CD8-positive, alpha-beta T cell (primary cell): ENCODE measurements at regions of chr14 and their contacts with region 1.

Region 1: DNA sequence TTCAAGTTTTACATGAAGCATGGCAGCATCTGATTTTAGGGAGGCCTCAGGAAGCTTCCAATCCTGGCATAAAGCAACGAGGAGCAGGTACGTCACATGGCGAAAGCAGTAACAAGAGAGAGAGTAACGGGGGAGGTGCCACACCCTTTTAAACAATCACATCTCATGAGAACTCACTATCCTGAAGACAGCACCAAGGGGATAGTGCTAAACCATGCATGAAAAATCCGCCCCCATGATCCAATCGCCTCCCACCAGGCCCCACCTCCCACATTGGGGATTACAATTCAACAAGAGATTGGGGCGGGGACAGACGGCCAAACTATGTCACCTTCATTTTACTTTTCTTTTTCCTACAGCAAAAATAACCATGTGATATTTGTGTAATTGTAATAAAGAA is 7.2 kb upstream of the MAP3K9 start:
- DNase-seq: no peak
- ATAC-seq: no peak
- H3K4me3 ChIP-seq: no peak overlapping the region
- H3K4me3 Mint-ChIP-seq: no peak overlapping the region
- H3K27ac ChIP-seq: no peak overlapping the region
- H3K27ac Mint-ChIP-seq: no peak overlapping the region
- H3K4me1 ChIP-seq: peaks cover 8% of the 10 kb centered on the region
- H3K4me1 Mint-ChIP-seq: peaks cover 11% of the 10 kb centered on the region
- H3K27me3 ChIP-seq: no peaks in the 10 kb centered on the region
- H3K27me3 Mint-ChIP-seq: peaks cover 3% of the 10 kb centered on the region
- CTCF ChIP-seq: no peak

Region 2: GRCh38 chr14:70622111-70622712 is 194.3 kb before region 1 on chr14:
- CTCF ChIA-PET with region 1: interaction called, 35 read pairs
- POLR2A ChIA-PET with region 1: no interaction called
- intact Hi-C with region 1: loop called (anchors 1 kb)
- DNase-seq: peak in 8 of 9 experiments; percentile 31 to 73 (median 62)
- ATAC-seq: peak; percentile 96
- H3K4me3 ChIP-seq: no peak overlapping the region
- H3K4me3 Mint-ChIP-seq: no peak overlapping the region
- H3K27ac ChIP-seq: no peak overlapping the region
- H3K27ac Mint-ChIP-seq: no peak overlapping the region
- H3K4me1 ChIP-seq: no peaks in the 10 kb centered on the region
- H3K4me1 Mint-ChIP-seq: peaks cover 3% of the 10 kb centered on the region
- H3K27me3 ChIP-seq: peaks cover 0 to 2% of the 10 kb centered on the region in 2 experiments
- H3K27me3 Mint-ChIP-seq: no peaks in the 10 kb centered on the region
- CTCF ChIP-seq: peak; percentile 93

Region 3: GRCh38 chr14:70707138-70708038 is 109.1 kb before region 1 on chr14:
- CTCF ChIA-PET with region 1: interaction called, 25 read pairs
- POLR2A ChIA-PET with region 1: no interaction called
- intact Hi-C with region 1: loop called in 1 of 2 experiments (anchors 2 kb)
- DNase-seq: no peak
- ATAC-seq: no peak
- H3K4me3 ChIP-seq: no peak overlapping the region
- H3K4me3 Mint-ChIP-seq: no peak overlapping the region
- H3K27ac ChIP-seq: no peak overlapping the region
- H3K27ac Mint-ChIP-seq: no peak overlapping the region
- H3K4me1 ChIP-seq: no peaks in the 10 kb centered on the region
- H3K4me1 Mint-ChIP-seq: no peaks in the 10 kb centered on the region
- H3K27me3 ChIP-seq: no peaks in the 10 kb centered on the region
- H3K27me3 Mint-ChIP-seq: no peaks in the 10 kb centered on the region
- CTCF ChIP-seq: no peak

Region 4: GRCh38 chr14:70735043-70735442 is 81.5 kb before region 1 on chr14:
- CTCF ChIA-PET with region 1: interaction called, 10 read pairs
- POLR2A ChIA-PET with region 1: no interaction called
- intact Hi-C with region 1: no loop called
- DNase-seq: no peak
- ATAC-seq: no peak
- H3K4me3 ChIP-seq: no peak overlapping the region
- H3K4me3 Mint-ChIP-seq: no peak overlapping the region
- H3K27ac ChIP-seq: no peak overlapping the region
- H3K27ac Mint-ChIP-seq: no peak overlapping the region
- H3K4me1 ChIP-seq: no peaks in the 10 kb centered on the region
- H3K4me1 Mint-ChIP-seq: no peaks in the 10 kb centered on the region
- H3K27me3 ChIP-seq: no peaks in the 10 kb centered on the region
- H3K27me3 Mint-ChIP-seq: no peaks in the 10 kb centered on the region
- CTCF ChIP-seq: no peak

Region 5: GRCh38 chr14:70827396-70828151 is 11.0 kb after region 1 on chr14:
- CTCF ChIA-PET with region 1: interaction called, 45 read pairs
- POLR2A ChIA-PET with region 1: no interaction called
- intact Hi-C with region 1: no loop called
- DNase-seq: no peak
- ATAC-seq: no peak
- H3K4me3 ChIP-seq: no peak overlapping the region
- H3K4me3 Mint-ChIP-seq: no peak overlapping the region
- H3K27ac ChIP-seq: no peak overlapping the region
- H3K27ac Mint-ChIP-seq: no peak overlapping the region
- H3K4me1 ChIP-seq: peaks cover 6% of the 10 kb centered on the region
- H3K4me1 Mint-ChIP-seq: peaks cover 5% of the 10 kb centered on the region
- H3K27me3 ChIP-seq: no peaks in the 10 kb centered on the region
- H3K27me3 Mint-ChIP-seq: peaks cover 4% of the 10 kb centered on the region
- CTCF ChIP-seq: no peak

Region 6: GRCh38 chr14:70934502-70935134 is 118.1 kb after region 1 on chr14:
- CTCF ChIA-PET with region 1: interaction called, 13 read pairs
- POLR2A ChIA-PET with region 1: no interaction called
- intact Hi-C with region 1: no loop called
- DNase-seq: peak in 1 of 9 experiments; percentile 37
- ATAC-seq: peak; percentile 67
- H3K4me3 ChIP-seq: peak overlapping the region in 1 of 2 experiments; percentile 8
- H3K4me3 Mint-ChIP-seq: peak overlapping the region; percentile 66
- H3K27ac ChIP-seq: peak overlapping the region; percentile 18 to 61
- H3K27ac Mint-ChIP-seq: peak overlapping the region; percentile 84
- H3K4me1 ChIP-seq: peaks cover 25% of the 10 kb centered on the region
- H3K4me1 Mint-ChIP-seq: peaks cover 84% of the 10 kb centered on the region
- H3K27me3 ChIP-seq: no peaks in the 10 kb centered on the region
- H3K27me3 Mint-ChIP-seq: no peaks in the 10 kb centered on the region
- CTCF ChIP-seq: no peak

Region 7: GRCh38 chr14:70972107-70972976 is 155.8 kb after region 1 on chr14:
- CTCF ChIA-PET with region 1: interaction called, 51 read pairs
- POLR2A ChIA-PET with region 1: interaction called, 7 read pairs
- intact Hi-C with region 1: loop called (anchors 1 kb)
- DNase-seq: peak; percentile 65 to 90 (median 85)
- ATAC-seq: peak; percentile 81
- H3K4me3 ChIP-seq: no peak overlapping the region
- H3K4me3 Mint-ChIP-seq: no peak overlapping the region
- H3K27ac ChIP-seq: peak overlapping the region in 1 of 2 experiments; percentile 0
- H3K27ac Mint-ChIP-seq: peak overlapping the region; percentile 53
- H3K4me1 ChIP-seq: peaks cover 25% of the 10 kb centered on the region
- H3K4me1 Mint-ChIP-seq: peaks cover 48% of the 10 kb centered on the region
- H3K27me3 ChIP-seq: no peaks in the 10 kb centered on the region
- H3K27me3 Mint-ChIP-seq: no peaks in the 10 kb centered on the region
- CTCF ChIP-seq: peak; percentile 81